ENCODE measurements at regions of chr19 and their contacts with region 1.

Region 1: DNA sequence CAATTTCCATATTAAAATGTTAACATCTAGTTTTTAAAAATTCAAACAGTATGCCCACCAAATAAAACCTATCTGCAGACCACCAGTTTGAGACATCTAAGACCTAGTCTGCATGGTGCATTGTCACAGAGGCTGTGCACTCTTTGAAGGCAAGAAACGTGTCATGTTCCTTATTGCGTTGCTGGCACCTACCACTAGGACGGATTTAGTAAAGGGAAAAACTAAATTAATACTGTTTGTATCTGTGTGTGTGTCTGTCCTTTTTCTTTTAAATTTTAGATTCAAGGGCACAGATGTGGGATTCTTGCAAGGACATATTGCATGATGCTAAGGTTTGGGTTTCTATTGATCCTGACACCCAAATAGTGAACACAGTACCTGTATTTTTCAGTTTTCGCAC is 481.4 kb downstream of the UQCRFS1 start:
- DNase-seq: no peak
- H3K4me3 ChIP-seq: no peak overlapping the region
- H3K27ac ChIP-seq: no peak overlapping the region
- H3K4me1 ChIP-seq: peaks cover 8% of the 10 kb centered on the region
- H3K27me3 ChIP-seq: peaks cover 8% of the 10 kb centered on the region
- CTCF ChIP-seq: no peak
- POLR2A ChIP-seq: no peak

Region 2: GRCh38 chr19:28686756-28687155 is 44.8 kb before region 1 on chr19:
- intact Hi-C with region 1: no loop called
- DNase-seq: no peak
- H3K4me3 ChIP-seq: no peak overlapping the region
- H3K27ac ChIP-seq: no peak overlapping the region
- H3K4me1 ChIP-seq: no peaks in the 10 kb centered on the region
- H3K27me3 ChIP-seq: no peaks in the 10 kb centered on the region
- CTCF ChIP-seq: no peak
- POLR2A ChIP-seq: no peak

Region 3: GRCh38 chr19:29514525-29515232 is 783.1 kb after region 1 on chr19:
- intact Hi-C with region 1: loop called (anchors 5 kb)
- DNase-seq: no peak
- H3K4me3 ChIP-seq: no peak overlapping the region
- H3K27ac ChIP-seq: no peak overlapping the region
- H3K4me1 ChIP-seq: no peaks in the 10 kb centered on the region
- H3K27me3 ChIP-seq: no peaks in the 10 kb centered on the region
- CTCF ChIP-seq: no peak
- POLR2A ChIP-seq: no peak